SK-N-SH (cell line): ENCODE measurements at regions of chr12 and their contacts with region 1.

Region 1: GRCh38 chr12:51341259-51342007 is 5.0 kb downstream of the CELA1 start:
- DNase-seq: peak; percentile 77
- H3K4me3 ChIP-seq: peak overlapping the region in 1 of 2 experiments; percentile 36; a peak in 1 of 4 replicates
- H3K27ac ChIP-seq: no peak overlapping the region
- H3K4me1 ChIP-seq: peaks cover 4 to 5% of the 10 kb centered on the region in 2 experiments; a peak in 1 of 4 replicates
- H3K27me3 ChIP-seq: no peaks in the 10 kb centered on the region
- CTCF ChIP-seq: peak; percentile 97
- EP300 ChIP-seq: no peak
- RAD21 ChIP-seq: peak; percentile 97

Region 2: DNA sequence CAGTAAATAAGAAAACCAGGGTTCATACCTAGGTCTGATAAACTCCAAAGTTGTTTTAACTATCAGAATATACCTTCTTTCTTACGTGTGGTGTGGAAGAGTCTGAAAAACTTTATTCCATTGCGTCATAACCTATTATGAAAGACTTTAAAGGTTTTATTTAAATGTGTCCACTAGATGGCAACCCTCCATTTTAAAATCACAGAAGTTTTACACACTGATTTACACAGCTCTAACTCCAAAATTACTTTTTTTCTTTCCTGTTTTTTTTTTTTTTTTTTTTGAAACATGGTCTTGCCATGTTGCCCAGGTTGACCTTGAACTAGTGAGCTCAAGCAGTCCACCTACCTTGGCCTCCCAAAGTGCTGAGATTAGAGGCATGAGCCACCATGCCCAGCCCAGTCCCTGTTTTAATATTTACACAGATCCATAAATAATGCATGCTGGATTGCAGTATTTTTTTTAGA is 516.0 kb before region 1 on chr12:
- CTCF ChIA-PET with region 1: interaction called, 17 read pairs
- POLR2A ChIA-PET with region 1: no interaction called
- DNase-seq: peak; percentile 36
- H3K4me3 ChIP-seq: no peak overlapping the region
- H3K27ac ChIP-seq: peak overlapping the region in 1 of 2 experiments; percentile 18; a peak in 1 of 4 replicates
- H3K4me1 ChIP-seq: no peaks in the 10 kb centered on the region; a peak in 1 of 4 replicates
- H3K27me3 ChIP-seq: no peaks in the 10 kb centered on the region
- CTCF ChIP-seq: peak; percentile 68
- EP300 ChIP-seq: no peak
- RAD21 ChIP-seq: peak; percentile 79

Region 3: GRCh38 chr12:51253276-51253675 is 88.2 kb before region 1 on chr12:
- CTCF ChIA-PET with region 1: interaction called, 11 read pairs
- POLR2A ChIA-PET with region 1: no interaction called
- DNase-seq: no peak
- H3K4me3 ChIP-seq: no peak overlapping the region
- H3K27ac ChIP-seq: no peak overlapping the region
- H3K4me1 ChIP-seq: no peaks in the 10 kb centered on the region
- H3K27me3 ChIP-seq: no peaks in the 10 kb centered on the region
- CTCF ChIP-seq: no peak
- EP300 ChIP-seq: no peak
- RAD21 ChIP-seq: no peak

Region 4: GRCh38 chr12:51329742-51330141 is 11.7 kb before region 1 on chr12:
- CTCF ChIA-PET with region 1: interaction called, 26 read pairs
- POLR2A ChIA-PET with region 1: no interaction called
- DNase-seq: no peak
- H3K4me3 ChIP-seq: no peak overlapping the region
- H3K27ac ChIP-seq: no peak overlapping the region
- H3K4me1 ChIP-seq: no peaks in the 10 kb centered on the region
- H3K27me3 ChIP-seq: no peaks in the 10 kb centered on the region
- CTCF ChIP-seq: no peak
- EP300 ChIP-seq: no peak
- RAD21 ChIP-seq: no peak

Region 5: GRCh38 chr12:51531978-51532497 is 190.6 kb after region 1 on chr12:
- CTCF ChIA-PET with region 1: interaction called, 10 read pairs
- POLR2A ChIA-PET with region 1: no interaction called
- DNase-seq: peak; percentile 80
- H3K4me3 ChIP-seq: no peak overlapping the region
- H3K27ac ChIP-seq: no peak overlapping the region
- H3K4me1 ChIP-seq: peaks cover 6 to 27% of the 10 kb centered on the region in 2 experiments; a peak in 2 of 4 replicates
- H3K27me3 ChIP-seq: no peaks in the 10 kb centered on the region
- CTCF ChIP-seq: peak; percentile 83
- EP300 ChIP-seq: no peak
- RAD21 ChIP-seq: peak; percentile 95